ENCODE measurements at regions of chr1 and their contacts with region 1.

Region 1: DNA sequence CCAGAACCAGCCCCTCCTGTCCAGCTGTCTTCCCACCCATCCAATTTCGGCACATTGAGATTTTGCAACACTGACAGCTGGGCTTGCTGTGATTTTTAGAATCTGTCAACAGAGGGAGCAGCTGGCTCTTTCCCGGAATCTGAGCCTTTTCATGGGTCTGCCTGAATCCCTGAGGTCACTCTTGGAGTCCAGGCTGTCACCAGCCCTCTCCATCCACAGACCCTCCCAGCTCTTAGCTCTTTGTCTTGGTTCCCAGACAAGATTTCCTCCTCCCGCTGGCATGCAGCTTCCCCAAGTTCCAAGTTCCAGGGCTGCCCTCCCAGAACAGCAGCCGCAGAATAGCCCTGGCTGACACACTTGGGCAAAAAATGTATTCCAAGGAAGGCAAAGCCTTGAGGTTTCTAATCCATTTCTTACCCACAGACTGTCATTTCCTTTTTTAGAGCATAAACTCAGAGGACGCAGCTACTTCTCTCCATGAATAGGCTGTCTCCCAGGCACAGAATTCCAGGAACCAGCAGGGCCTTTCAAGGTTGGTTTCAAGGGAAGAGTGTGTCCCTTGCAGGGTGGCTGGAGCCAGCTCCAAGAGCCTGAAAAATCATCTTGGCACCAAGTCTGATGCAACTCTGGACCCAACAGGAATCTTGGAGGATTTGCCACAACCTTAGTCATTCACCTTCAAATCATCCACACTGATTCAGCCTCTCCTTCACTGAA is 7.1 kb upstream of the TMEM61 start:
- DNase-seq: peak; percentile 54
- H3K4me3 Mint-ChIP-seq: no peak overlapping the region
- H3K27ac Mint-ChIP-seq: peak overlapping the region; percentile 49
- H3K4me1 Mint-ChIP-seq: peaks cover 30% of the 10 kb centered on the region
- H3K27me3 Mint-ChIP-seq: no peaks in the 10 kb centered on the region
- CTCF ChIP-seq: peak; percentile 34

Region 2: GRCh38 chr1:54922921-54923531 is 50.3 kb before region 1 on chr1:
- CTCF ChIA-PET with region 1: no interaction called
- POLR2A ChIA-PET with region 1: no interaction called
- intact Hi-C with region 1: no loop called
- DNase-seq: peak; percentile 60
- H3K4me3 Mint-ChIP-seq: no peak overlapping the region
- H3K27ac Mint-ChIP-seq: peak overlapping the region; percentile 73
- H3K4me1 Mint-ChIP-seq: peaks cover 14% of the 10 kb centered on the region
- H3K27me3 Mint-ChIP-seq: peaks cover 17% of the 10 kb centered on the region
- CTCF ChIP-seq: no peak

Region 3: DNA sequence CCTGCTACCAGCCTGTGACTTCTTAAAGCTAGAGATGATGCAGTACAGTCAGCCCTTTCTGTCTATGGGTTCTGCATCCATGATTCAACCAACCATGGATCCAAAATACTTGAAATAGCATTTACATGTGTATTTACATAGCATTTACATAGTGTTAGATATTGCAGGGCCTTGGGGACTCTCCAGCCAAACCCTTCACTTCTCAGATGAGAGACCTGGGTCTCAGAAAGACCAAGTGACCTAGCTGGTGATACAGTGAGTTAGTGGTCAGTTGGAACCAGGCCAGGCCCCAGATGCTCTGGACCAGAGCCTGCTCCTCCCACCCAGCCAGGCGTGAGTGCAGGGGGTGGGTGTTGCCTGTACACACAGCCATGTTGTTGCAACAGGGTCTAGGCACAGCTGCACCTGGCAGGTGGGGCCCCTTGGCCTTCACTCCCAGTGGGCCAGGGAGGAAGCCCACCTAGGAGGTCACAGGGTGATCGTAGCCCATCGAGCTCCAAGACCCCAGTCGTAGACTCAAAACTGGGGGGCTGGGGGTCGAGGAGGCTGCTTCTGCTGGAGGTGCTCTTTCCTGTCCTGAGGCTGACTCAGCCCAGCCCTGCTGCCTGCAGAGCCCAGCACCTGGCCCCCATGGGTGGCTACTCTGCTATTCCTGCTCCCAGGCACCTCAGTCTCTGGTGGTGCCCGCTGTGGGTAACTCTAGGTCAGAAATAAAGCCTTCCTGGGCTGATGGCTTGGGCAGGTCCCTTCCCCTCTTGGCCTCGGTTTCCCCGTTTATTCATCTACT is 14.7 kb after region 1 on chr1:
- CTCF ChIA-PET with region 1: interaction called, 14 read pairs
- POLR2A ChIA-PET with region 1: no interaction called
- intact Hi-C with region 1: no loop called
- DNase-seq: no peak
- H3K4me3 Mint-ChIP-seq: no peak overlapping the region
- H3K27ac Mint-ChIP-seq: no peak overlapping the region
- H3K4me1 Mint-ChIP-seq: no peaks in the 10 kb centered on the region
- H3K27me3 Mint-ChIP-seq: no peaks in the 10 kb centered on the region
- CTCF ChIP-seq: no peak

Region 4: DNA sequence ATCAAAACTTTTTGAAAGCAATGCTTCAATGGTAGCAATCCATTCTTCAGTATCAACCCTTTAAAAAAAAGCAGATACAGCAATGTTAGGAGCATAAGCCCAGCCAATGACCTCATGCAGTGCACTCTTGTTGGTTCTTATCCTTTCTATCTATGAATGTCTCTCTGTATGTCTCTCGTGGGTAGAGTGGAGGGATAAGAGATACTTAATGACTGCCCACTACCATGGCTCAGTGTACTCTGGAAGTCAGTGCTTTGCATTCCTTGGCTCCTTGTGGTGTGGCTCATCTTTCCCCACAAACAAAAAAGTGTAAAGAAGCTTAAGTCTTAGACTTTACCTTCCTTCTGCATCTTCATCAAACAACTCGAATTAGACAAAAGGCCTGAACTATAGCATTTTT is 116.3 kb after region 1 on chr1:
- CTCF ChIA-PET with region 1: no interaction called
- POLR2A ChIA-PET with region 1: no interaction called
- intact Hi-C with region 1: no loop called
- DNase-seq: no peak
- H3K4me3 Mint-ChIP-seq: no peak overlapping the region
- H3K27ac Mint-ChIP-seq: no peak overlapping the region
- H3K4me1 Mint-ChIP-seq: no peaks in the 10 kb centered on the region
- H3K27me3 Mint-ChIP-seq: no peaks in the 10 kb centered on the region
- CTCF ChIP-seq: no peak